CD8-positive, alpha-beta T cell (primary cell): ENCODE measurements at regions of chr19 and their contacts with region 1.

Region 1: DNA sequence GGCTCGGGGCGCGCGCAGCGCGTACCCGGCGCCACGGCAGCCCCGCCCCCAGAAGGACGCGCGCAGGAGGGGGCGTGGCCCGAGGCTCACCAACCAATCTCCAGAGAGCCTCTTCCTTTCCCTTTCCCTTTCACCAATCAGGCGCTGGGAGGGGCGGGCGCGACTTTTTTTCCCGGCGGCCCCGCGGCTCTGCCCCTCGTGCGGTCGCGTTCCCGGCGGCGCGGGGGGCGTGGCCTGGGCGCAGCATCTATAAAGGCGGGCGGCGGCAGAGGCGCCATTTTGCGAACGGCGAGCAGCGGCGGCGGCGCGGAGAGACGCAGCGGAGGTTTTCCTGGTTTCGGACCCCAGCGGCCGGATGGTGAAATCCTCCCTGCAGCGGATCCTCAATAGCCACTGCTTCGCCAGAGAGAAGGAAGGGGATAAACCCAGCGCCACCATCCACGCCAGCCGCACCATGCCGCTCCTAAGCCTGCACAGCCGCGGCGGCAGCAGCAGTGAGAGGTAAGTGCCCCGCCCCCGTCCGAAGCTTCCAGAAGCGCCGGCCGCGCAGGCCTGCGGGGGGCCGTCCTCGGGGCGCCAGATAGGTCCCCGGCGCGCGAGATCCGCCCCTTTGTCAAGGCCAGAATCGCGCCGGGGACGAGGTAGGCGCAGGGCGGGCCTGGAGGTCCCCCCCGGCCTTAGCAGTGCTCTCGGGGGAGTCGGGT is 12.6 kb downstream of the PEAK3 start:
- DNase-seq: peak; percentile 98 to 100 (median 99)
- ATAC-seq: peak; percentile 80
- H3K4me3 ChIP-seq: peak overlapping the region; percentile 82 to 98
- H3K4me3 Mint-ChIP-seq: peak overlapping the region; percentile 91
- H3K27ac ChIP-seq: peak overlapping the region; percentile 80 to 86
- H3K27ac Mint-ChIP-seq: peak overlapping the region; percentile 92
- H3K4me1 ChIP-seq: peaks cover 45% of the 10 kb centered on the region
- H3K4me1 Mint-ChIP-seq: peaks cover 35% of the 10 kb centered on the region
- H3K27me3 ChIP-seq: no peaks in the 10 kb centered on the region
- H3K27me3 Mint-ChIP-seq: no peaks in the 10 kb centered on the region
- CTCF ChIP-seq: no peak

Region 2: DNA sequence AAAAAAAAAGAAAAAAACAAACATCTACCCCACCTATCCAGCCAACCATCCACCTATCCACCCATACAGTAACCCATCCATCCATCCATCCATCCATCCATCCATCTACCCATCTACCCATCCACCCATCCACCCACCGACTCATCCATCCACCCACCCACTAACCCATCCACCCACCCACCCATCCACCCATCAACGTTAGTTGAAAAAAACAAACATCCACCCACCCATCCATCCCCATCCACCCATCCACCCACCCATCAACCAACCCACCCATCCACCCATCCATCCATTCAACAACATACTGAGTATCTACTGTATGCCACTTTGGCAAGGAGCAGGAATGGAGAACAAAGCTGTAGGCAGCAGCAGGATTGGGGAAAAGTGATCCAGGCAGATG is 111.9 kb before region 1 on chr19:
- CTCF ChIA-PET with region 1: interaction called, 6 read pairs
- POLR2A ChIA-PET with region 1: no interaction called
- intact Hi-C with region 1: loop called (anchors 2 kb)
- DNase-seq: no peak
- ATAC-seq: no peak
- H3K4me3 ChIP-seq: no peak overlapping the region
- H3K4me3 Mint-ChIP-seq: no peak overlapping the region
- H3K27ac ChIP-seq: no peak overlapping the region
- H3K27ac Mint-ChIP-seq: no peak overlapping the region
- H3K4me1 ChIP-seq: no peaks in the 10 kb centered on the region
- H3K4me1 Mint-ChIP-seq: peaks cover 2% of the 10 kb centered on the region
- H3K27me3 ChIP-seq: no peaks in the 10 kb centered on the region
- H3K27me3 Mint-ChIP-seq: no peaks in the 10 kb centered on the region
- CTCF ChIP-seq: no peak

Region 3: GRCh38 chr19:2253106-2254053 is 16.0 kb before region 1 on chr19:
- CTCF ChIA-PET with region 1: interaction called, 76 read pairs
- POLR2A ChIA-PET with region 1: interaction called, 46 read pairs
- intact Hi-C with region 1: loop called (anchors 1 kb)
- DNase-seq: peak in 8 of 9 experiments; percentile 44 to 82 (median 66)
- ATAC-seq: peak; percentile 61
- H3K4me3 ChIP-seq: peak overlapping the region; percentile 50 to 71
- H3K4me3 Mint-ChIP-seq: peak overlapping the region; percentile 78
- H3K27ac ChIP-seq: no peak overlapping the region
- H3K27ac Mint-ChIP-seq: no peak overlapping the region
- H3K4me1 ChIP-seq: peaks cover 47% of the 10 kb centered on the region
- H3K4me1 Mint-ChIP-seq: peaks cover 19% of the 10 kb centered on the region
- H3K27me3 ChIP-seq: peaks cover 16 to 26% of the 10 kb centered on the region in 2 experiments
- H3K27me3 Mint-ChIP-seq: no peaks in the 10 kb centered on the region
- CTCF ChIP-seq: peak; percentile 55

Region 4: DNA sequence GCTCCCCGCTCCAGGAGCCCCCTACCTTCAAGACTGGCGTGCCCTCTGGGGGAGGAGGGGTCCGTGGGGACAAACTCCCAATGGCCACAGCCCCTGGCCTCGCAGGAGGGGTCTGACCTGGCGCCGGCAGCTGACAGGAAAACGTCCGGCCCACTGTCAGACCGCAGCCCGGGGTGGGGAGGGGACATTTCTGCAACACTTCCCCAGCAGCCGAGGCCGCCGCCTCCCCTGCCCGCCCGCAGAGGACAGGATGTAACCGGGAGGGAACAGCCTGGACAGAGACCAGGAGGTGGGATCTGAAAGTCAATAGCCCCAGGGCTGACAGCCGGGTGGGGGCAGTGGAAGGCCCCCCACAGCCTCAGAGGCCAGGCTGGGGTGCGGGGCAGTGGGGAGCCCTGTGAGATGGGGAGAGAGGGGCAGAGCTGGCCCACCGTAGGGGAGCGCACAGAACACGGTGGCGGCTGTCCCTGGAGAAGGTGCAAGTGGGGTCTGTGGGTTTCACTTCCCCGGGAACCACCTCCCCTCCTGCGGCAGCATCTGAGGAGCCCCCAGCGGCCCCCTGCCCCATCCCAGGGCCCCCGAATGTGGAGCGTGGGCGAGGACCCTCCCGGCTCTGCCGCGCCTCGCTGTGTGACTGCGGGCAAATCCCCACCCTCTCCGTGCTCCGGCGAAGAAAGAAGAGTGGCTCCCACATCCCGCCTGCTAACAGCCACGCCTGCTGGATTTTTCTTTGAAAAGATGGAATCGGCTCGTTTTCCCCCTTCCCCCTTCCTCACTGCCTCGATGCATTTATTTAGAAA is 12.9 kb after region 1 on chr19 and contains the start of gene PEAK3:
- CTCF ChIA-PET with region 1: interaction called, 58 read pairs
- POLR2A ChIA-PET with region 1: interaction called, 3 read pairs
- intact Hi-C with region 1: no loop called
- DNase-seq: peak in 7 of 9 experiments; percentile 36 to 68 (median 56)
- ATAC-seq: peak; percentile 37
- H3K4me3 ChIP-seq: peak within 1 kb of the TSS; percentile 37 to 45
- H3K4me3 Mint-ChIP-seq: peak within 1 kb of the TSS; percentile 58
- H3K27ac ChIP-seq: peak within 1 kb of the TSS in 1 of 2 experiments; percentile 33
- H3K27ac Mint-ChIP-seq: no peak within 1 kb of the TSS
- H3K4me1 ChIP-seq: peaks cover 21% of the 10 kb centered on the region
- H3K4me1 Mint-ChIP-seq: peaks cover 12% of the 10 kb centered on the region
- H3K27me3 ChIP-seq: no peaks in the 10 kb centered on the region
- H3K27me3 Mint-ChIP-seq: no peaks in the 10 kb centered on the region
- CTCF ChIP-seq: no peak
- total RNA-seq, gene PEAK3: not detected

Region 5: GRCh38 chr19:2328401-2329148 is 59.2 kb after region 1 on chr19 and contains the starts of genes LSM7 and SPPL2B:
- CTCF ChIA-PET with region 1: no interaction called
- POLR2A ChIA-PET with region 1: interaction called, 4 read pairs
- intact Hi-C with region 1: loop called (anchors 1 kb)
- DNase-seq: peak; percentile 81 to 96 (median 93)
- ATAC-seq: peak; percentile 62
- H3K4me3 ChIP-seq: peak within 1 kb of the TSS; percentile 77 to 93
- H3K4me3 Mint-ChIP-seq: peak within 1 kb of the TSS; percentile 97
- H3K27ac ChIP-seq: peak within 1 kb of the TSS; percentile 71 to 82
- H3K27ac Mint-ChIP-seq: peak within 1 kb of the TSS; percentile 99
- H3K4me1 ChIP-seq: peaks cover 60% of the 10 kb centered on the region
- H3K4me1 Mint-ChIP-seq: peaks cover 62% of the 10 kb centered on the region
- H3K27me3 ChIP-seq: no peaks in the 10 kb centered on the region
- H3K27me3 Mint-ChIP-seq: no peaks in the 10 kb centered on the region
- CTCF ChIP-seq: no peak
- total RNA-seq, gene LSM7: 103 to 113 TPM
- total RNA-seq, gene SPPL2B: 123 to 126 TPM

Region 6: DNA sequence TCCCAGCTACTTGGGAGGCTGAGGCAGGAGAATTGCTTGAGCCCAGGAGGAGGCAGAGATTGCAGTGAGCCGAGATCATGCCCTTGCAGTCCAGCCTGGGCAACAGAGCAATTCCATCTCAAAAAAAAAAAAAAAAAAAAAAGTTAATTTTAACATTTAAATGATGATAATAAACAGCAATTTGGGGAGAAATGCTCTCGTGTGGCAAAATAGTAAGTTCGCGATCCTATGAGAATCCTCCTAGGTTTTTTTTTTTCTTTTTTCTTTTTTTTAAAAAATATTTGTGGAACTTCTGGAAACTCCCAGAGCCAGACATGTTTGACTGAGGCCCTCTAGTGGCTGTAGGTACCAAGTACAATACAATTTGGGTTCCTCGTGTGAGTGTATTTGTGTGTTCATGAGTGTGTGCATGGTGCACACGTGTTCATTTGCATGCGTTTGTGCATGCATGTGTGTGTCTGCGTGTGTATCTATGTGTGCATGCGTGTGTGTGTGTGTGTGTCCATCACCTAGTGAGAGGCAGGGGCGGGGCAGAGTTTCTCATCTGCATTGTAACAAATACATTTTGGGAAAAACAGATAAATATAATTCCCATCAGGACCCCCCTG is 121.8 kb after region 1 on chr19:
- CTCF ChIA-PET with region 1: interaction called, 60 read pairs
- POLR2A ChIA-PET with region 1: interaction called, 5 read pairs
- intact Hi-C with region 1: loop called in 1 of 2 experiments (anchors 2 kb)
- DNase-seq: peak in 7 of 9 experiments; percentile 10 to 83 (median 42)
- ATAC-seq: peak; percentile 57
- H3K4me3 ChIP-seq: no peak overlapping the region
- H3K4me3 Mint-ChIP-seq: no peak overlapping the region
- H3K27ac ChIP-seq: no peak overlapping the region
- H3K27ac Mint-ChIP-seq: no peak overlapping the region
- H3K4me1 ChIP-seq: no peaks in the 10 kb centered on the region
- H3K4me1 Mint-ChIP-seq: peaks cover 12% of the 10 kb centered on the region
- H3K27me3 ChIP-seq: no peaks in the 10 kb centered on the region
- H3K27me3 Mint-ChIP-seq: peaks cover 2% of the 10 kb centered on the region
- CTCF ChIP-seq: peak; percentile 77

Region 7: DNA sequence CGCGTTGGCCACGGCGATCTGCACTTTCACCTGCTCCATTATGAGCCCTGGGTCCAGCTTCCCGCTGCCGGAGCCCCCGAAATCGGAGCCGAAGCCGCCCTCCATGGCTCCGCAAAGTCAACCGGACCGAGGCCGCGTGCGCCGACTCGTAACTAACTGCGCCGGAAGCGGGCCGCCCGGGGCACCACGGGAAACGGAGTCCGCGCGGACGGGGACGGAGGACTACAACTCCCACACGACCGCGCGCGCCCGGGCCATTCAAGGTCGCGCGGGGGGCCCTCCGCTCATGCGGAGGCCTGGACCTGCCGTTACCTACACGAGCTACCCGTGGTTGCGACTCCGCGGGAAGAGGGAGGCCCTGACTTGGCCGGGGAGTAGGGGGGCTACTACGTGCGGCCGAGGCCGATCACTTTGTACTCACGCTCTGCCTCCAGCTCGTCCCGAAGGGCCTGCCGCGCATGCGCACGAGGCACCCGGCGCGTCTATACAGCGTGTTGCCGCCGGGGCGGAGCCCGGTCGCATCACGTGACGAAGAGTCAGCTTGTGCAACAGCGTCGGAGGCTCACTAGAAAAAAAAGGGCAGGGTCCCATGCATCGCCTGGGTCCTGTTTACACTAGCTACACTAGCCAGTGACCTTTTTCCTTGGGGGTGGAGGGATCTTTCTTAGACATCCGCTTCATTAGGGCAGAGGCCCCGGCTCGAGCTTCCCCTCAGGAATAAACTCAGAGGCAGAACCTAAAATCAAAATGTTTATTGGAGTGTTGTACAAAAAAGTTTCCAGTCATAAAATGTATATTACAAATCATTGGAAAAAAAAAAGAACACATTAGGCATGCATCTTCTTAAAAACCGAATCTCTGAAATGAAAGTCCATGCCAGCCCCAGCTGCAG is 158.3 kb after region 1 on chr19 and contains the start of gene TIMM13:
- CTCF ChIA-PET with region 1: no interaction called
- POLR2A ChIA-PET with region 1: no interaction called
- intact Hi-C with region 1: loop called in 1 of 2 experiments (anchors 1 kb)
- DNase-seq: peak; percentile 91 to 98 (median 96)
- ATAC-seq: peak; percentile 94
- H3K4me3 ChIP-seq: peak within 1 kb of the TSS; percentile 92 to 98
- H3K4me3 Mint-ChIP-seq: peak within 1 kb of the TSS; percentile 95
- H3K27ac ChIP-seq: peak within 1 kb of the TSS; percentile 96 to 99
- H3K27ac Mint-ChIP-seq: peak within 1 kb of the TSS; percentile 98
- H3K4me1 ChIP-seq: peaks cover 19% of the 10 kb centered on the region
- H3K4me1 Mint-ChIP-seq: peaks cover 13% of the 10 kb centered on the region
- H3K27me3 ChIP-seq: no peaks in the 10 kb centered on the region
- H3K27me3 Mint-ChIP-seq: no peaks in the 10 kb centered on the region
- CTCF ChIP-seq: no peak
- total RNA-seq, gene TIMM13: 21.5 to 24.4 TPM

Region 8: GRCh38 chr19:2594319-2594718 is 324.9 kb after region 1 on chr19:
- CTCF ChIA-PET with region 1: no interaction called
- POLR2A ChIA-PET with region 1: no interaction called
- intact Hi-C with region 1: no loop called
- DNase-seq: no peak
- ATAC-seq: no peak
- H3K4me3 ChIP-seq: no peak overlapping the region
- H3K4me3 Mint-ChIP-seq: no peak overlapping the region
- H3K27ac ChIP-seq: no peak overlapping the region
- H3K27ac Mint-ChIP-seq: no peak overlapping the region
- H3K4me1 ChIP-seq: peaks cover 5% of the 10 kb centered on the region
- H3K4me1 Mint-ChIP-seq: peaks cover 9% of the 10 kb centered on the region
- H3K27me3 ChIP-seq: peaks cover 0 to 3% of the 10 kb centered on the region in 2 experiments
- H3K27me3 Mint-ChIP-seq: no peaks in the 10 kb centered on the region
- CTCF ChIP-seq: no peak